B cell (primary cell): ENCODE measurements at regions of chr5 and their contacts with region 1.

Region 1: GRCh38 chr5:151223469-151224264 is at the start of gene CCDC69:
- DNase-seq: peak; percentile 75
- ATAC-seq: peak; percentile 42
- H3K4me3 ChIP-seq: peak within 1 kb of the TSS; percentile 70 to 86 (median 80)
- H3K4me3 Mint-ChIP-seq: peak within 1 kb of the TSS; percentile 88
- H3K27ac ChIP-seq: peak within 1 kb of the TSS; percentile 94 to 99
- H3K27ac Mint-ChIP-seq: peak within 1 kb of the TSS; percentile 92
- H3K4me1 ChIP-seq: peaks cover 64 to 75% of the 10 kb centered on the region in 2 donors
- H3K4me1 Mint-ChIP-seq: peaks cover 71% of the 10 kb centered on the region
- H3K27me3 ChIP-seq: no peaks in the 10 kb centered on the region
- H3K27me3 Mint-ChIP-seq: no peaks in the 10 kb centered on the region
- CTCF ChIP-seq: no peak
- total RNA-seq, gene CCDC69: 125 and 129 TPM in 2 replicates

Region 2: DNA sequence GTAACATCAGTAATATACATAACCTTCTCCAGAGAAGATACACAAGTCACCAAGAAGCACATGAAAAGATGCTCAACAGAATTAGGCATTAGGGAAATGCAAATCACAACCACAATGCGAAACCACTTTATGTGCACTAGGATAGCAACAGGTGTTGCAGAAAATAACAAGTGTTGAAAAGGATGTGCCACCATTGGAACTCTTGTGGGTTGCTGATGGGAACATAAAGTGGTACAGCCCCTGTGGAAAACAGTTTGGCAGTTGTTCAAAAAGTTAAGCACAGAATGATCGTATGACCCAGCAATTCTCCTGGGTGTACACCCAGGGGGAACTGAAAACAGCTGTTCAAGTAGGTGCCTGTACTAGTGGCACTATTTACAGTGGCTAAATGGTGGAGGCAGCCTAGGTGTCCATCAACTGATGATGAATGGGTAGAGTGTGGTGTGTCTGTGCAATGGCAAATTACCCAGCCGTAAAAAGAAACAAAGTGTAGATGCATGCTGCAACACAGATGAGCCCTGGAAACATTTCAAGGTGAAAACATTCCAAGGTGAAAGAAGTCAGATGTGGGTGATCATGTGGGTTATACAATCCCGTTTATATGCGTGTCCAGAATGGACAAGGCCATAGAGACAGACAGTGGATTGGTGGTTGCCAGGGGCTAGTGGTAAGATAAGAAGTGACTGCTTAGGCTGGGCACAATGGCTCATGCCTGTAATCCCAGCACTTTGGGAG is 26.9 kb before region 1 on chr5:
- CTCF ChIA-PET with region 1: interaction called, 3 read pairs
- POLR2A ChIA-PET with region 1: interaction called, 5 read pairs
- intact Hi-C with region 1: loop called (anchors 1 kb)
- DNase-seq: peak; percentile 82
- ATAC-seq: peak; percentile 95
- H3K4me3 ChIP-seq: no peak overlapping the region
- H3K4me3 Mint-ChIP-seq: peak overlapping the region; percentile 67
- H3K27ac ChIP-seq: peak overlapping the region; percentile 61 to 67
- H3K27ac Mint-ChIP-seq: peak overlapping the region; percentile 97
- H3K4me1 ChIP-seq: peaks cover 41 to 55% of the 10 kb centered on the region in 2 donors
- H3K4me1 Mint-ChIP-seq: peaks cover 63% of the 10 kb centered on the region
- H3K27me3 ChIP-seq: no peaks in the 10 kb centered on the region
- H3K27me3 Mint-ChIP-seq: no peaks in the 10 kb centered on the region
- CTCF ChIP-seq: no peak

Region 3: DNA sequence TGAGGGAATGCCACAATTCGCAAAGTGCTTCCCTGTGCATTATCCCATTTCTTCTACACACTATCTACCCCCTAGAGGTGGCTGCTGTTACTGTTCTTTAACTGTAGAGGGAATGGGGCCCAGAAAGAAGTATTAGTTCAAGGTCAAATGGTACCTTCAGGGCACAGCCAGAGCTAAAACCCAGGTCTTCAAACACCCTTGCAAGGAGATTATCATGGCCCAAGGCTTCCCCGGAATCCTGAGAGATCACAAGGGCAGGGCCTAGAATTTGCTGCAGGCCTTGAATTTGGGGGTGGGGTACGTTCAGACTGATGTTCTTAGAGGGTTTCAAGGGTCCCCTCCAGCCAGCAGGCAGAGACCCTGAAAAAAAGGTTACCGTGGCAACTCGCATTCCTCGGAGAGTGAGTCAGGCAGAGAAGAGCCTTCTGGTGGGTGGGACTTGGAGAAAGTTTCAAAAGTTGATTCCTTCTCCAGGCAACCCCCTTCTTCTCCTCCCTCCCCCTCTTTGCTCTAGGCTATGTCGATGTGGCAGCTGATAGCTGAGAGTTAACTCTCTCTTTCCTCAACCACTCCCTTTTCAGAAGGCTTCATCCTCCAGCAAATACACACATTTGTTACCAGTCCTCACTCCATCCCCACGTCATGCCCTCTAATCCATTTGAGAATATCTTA is 461.2 kb after region 1 on chr5:
- CTCF ChIA-PET with region 1: no interaction called
- POLR2A ChIA-PET with region 1: no interaction called
- intact Hi-C with region 1: no loop called
- DNase-seq: no peak
- ATAC-seq: no peak
- H3K4me3 ChIP-seq: no peak overlapping the region
- H3K4me3 Mint-ChIP-seq: no peak overlapping the region
- H3K27ac ChIP-seq: no peak overlapping the region
- H3K27ac Mint-ChIP-seq: no peak overlapping the region
- H3K4me1 ChIP-seq: peaks cover 3 to 7% of the 10 kb centered on the region in 2 donors
- H3K4me1 Mint-ChIP-seq: peaks cover 8% of the 10 kb centered on the region
- H3K27me3 ChIP-seq: peaks cover 0 to 22% (median 11%) of the 10 kb centered on the region in 4 experiments
- H3K27me3 Mint-ChIP-seq: peaks cover 31% of the 10 kb centered on the region
- CTCF ChIP-seq: no peak